Aorta (tissue), 5 donors: ENCODE measurements at regions of chr2 and their contacts with region 1.

Region 1: GRCh38 chr2:230589497-230590015 is 123.1 kb upstream of the CAB39 start:
- DNase-seq: no peak
- ATAC-seq: no peak
- H3K4me3 ChIP-seq: no peak overlapping the region
- H3K27ac ChIP-seq: no peak overlapping the region
- H3K4me1 ChIP-seq: no peaks in the 10 kb centered on the region
- H3K27me3 ChIP-seq: no peaks in the 10 kb centered on the region

Region 2: GRCh38 chr2:230219419-230220331 is 369.9 kb before region 1 on chr2 and contains the start of gene SP110:
- intact Hi-C with region 1: loop called in 1 of 2 experiments (anchors 10 kb)
- DNase-seq: peak; percentile 88 to 91
- ATAC-seq: peak; percentile 93
- H3K4me3 ChIP-seq: peak within 1 kb of the TSS; percentile 77 to 97
- H3K27ac ChIP-seq: peak within 1 kb of the TSS; percentile 29 to 76
- H3K4me1 ChIP-seq: peaks cover 0 to 1% of the 10 kb centered on the region in 2 donors
- H3K27me3 ChIP-seq: no peaks in the 10 kb centered on the region
- total RNA-seq, gene SP110: 22.4 to 46.1 TPM

Region 3: GRCh38 chr2:230552181-230552580 is 37.4 kb before region 1 on chr2:
- intact Hi-C with region 1: no loop called
- DNase-seq: no peak
- ATAC-seq: no peak
- H3K4me3 ChIP-seq: no peak overlapping the region
- H3K27ac ChIP-seq: no peak overlapping the region
- H3K4me1 ChIP-seq: no peaks in the 10 kb centered on the region
- H3K27me3 ChIP-seq: peaks cover 0 to 3% of the 10 kb centered on the region in 2 donors